A673 (cell line): ENCODE measurements at regions of chr7 and their contacts with region 1.

Region 1: GRCh38 chr7:158856883-158857668 is 718 bp downstream of the DYNC2I1 start:
- DNase-seq: no peak
- H3K4me3 ChIP-seq: peak overlapping the region; percentile 92
- H3K27ac ChIP-seq: peak overlapping the region; percentile 82
- H3K4me1 ChIP-seq: peaks cover 7% of the 10 kb centered on the region
- H3K27me3 ChIP-seq: no peaks in the 10 kb centered on the region
- CTCF ChIP-seq: no peak

Region 2: GRCh38 chr7:158704704-158705468 is 152.2 kb before region 1 on chr7 and contains the start of gene NCAPG2:
- CTCF ChIA-PET with region 1: no interaction called
- POLR2A ChIA-PET with region 1: no interaction called
- intact Hi-C with region 1: loop called (anchors 10 kb)
- DNase-seq: peak; percentile 99
- H3K4me3 ChIP-seq: peak within 1 kb of the TSS; percentile 86
- H3K27ac ChIP-seq: peak within 1 kb of the TSS; percentile 98
- H3K4me1 ChIP-seq: peaks cover 21% of the 10 kb centered on the region
- H3K27me3 ChIP-seq: no peaks in the 10 kb centered on the region
- CTCF ChIP-seq: no peak
- total RNA-seq, gene NCAPG2: 127 and 129 TPM in 2 replicates